ENCODE measurements at regions of chr10 and their contacts with region 1.

Region 1: GRCh38 chr10:96642973-96643372 is 56.2 kb upstream of the TM9SF3 start:
- DNase-seq: peak; percentile 28
- H3K4me3 Mint-ChIP-seq: no peak overlapping the region
- H3K27ac Mint-ChIP-seq: no peak overlapping the region
- H3K4me1 Mint-ChIP-seq: peaks cover 28% of the 10 kb centered on the region
- H3K27me3 Mint-ChIP-seq: no peaks in the 10 kb centered on the region

Region 2: GRCh38 chr10:96395931-96396877 is 246.8 kb before region 1 on chr10:
- intact Hi-C with region 1: loop called (anchors 5 kb)
- DNase-seq: peak; percentile 21
- H3K4me3 Mint-ChIP-seq: no peak overlapping the region
- H3K27ac Mint-ChIP-seq: no peak overlapping the region
- H3K4me1 Mint-ChIP-seq: no peaks in the 10 kb centered on the region
- H3K27me3 Mint-ChIP-seq: peaks cover 37% of the 10 kb centered on the region

Region 3: DNA sequence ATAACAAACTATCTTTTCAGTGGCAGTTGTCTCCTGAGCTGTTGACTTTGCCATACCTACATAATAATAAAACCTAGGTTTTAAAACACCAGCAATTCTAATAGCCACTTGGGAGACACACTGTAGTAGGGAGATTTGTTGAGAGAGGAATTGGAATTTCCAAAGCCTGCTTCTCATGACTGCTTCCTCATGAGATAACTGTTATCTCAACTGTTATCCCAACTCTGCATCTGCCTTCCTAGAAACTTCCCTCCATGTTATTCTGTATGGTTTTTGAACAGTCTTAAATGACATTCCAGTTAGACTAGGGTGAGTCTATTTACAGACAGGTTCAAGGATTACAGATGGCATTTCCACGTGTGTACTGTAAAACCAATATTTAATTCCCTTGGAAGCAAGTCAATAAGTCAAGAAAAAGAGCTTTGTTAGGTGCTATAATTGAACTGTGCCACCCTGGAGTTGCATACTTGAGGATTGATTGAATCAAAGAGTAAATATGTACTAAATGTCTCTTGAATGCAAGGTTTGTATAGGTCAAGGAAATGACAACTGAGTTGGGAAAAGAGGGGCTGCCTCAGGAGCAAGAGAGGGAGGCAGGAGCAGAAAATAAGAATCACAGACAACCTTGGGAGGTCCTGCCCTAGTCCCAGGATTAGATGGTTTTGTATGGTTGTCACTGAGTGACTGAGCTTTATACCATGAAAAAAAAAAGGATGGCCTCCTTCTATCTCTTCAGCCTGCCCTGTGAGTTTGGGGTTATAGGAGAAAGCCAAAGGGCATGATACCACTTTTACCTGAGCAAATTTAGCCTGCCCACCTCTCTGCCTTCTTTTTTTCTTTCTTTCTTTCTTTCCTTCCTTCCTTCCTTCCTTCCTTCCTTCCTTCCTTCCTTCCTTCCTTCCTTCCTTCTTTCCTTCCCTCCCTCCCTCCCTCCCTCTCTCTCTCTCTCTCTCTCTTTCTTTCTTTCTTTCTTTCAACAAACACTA is 46.3 kb before region 1 on chr10:
- intact Hi-C with region 1: no loop called
- DNase-seq: no peak
- H3K4me3 Mint-ChIP-seq: no peak overlapping the region
- H3K27ac Mint-ChIP-seq: no peak overlapping the region
- H3K4me1 Mint-ChIP-seq: peaks cover 5% of the 10 kb centered on the region
- H3K27me3 Mint-ChIP-seq: peaks cover 8% of the 10 kb centered on the region

Region 4: GRCh38 chr10:96719850-96720421 is 77.0 kb after region 1 on chr10:
- intact Hi-C with region 1: loop called (anchors 1 kb)
- DNase-seq: peak; percentile 14
- H3K4me3 Mint-ChIP-seq: peak overlapping the region; percentile 95
- H3K27ac Mint-ChIP-seq: peak overlapping the region; percentile 88
- H3K4me1 Mint-ChIP-seq: peaks cover 27% of the 10 kb centered on the region
- H3K27me3 Mint-ChIP-seq: peaks cover 9% of the 10 kb centered on the region

Region 5: GRCh38 chr10:96743988-96744585 is 101.1 kb after region 1 on chr10:
- intact Hi-C with region 1: loop called (anchors 5 kb)
- DNase-seq: no peak
- H3K4me3 Mint-ChIP-seq: no peak overlapping the region
- H3K27ac Mint-ChIP-seq: no peak overlapping the region
- H3K4me1 Mint-ChIP-seq: peaks cover 11% of the 10 kb centered on the region
- H3K27me3 Mint-ChIP-seq: peaks cover 8% of the 10 kb centered on the region

Region 6: DNA sequence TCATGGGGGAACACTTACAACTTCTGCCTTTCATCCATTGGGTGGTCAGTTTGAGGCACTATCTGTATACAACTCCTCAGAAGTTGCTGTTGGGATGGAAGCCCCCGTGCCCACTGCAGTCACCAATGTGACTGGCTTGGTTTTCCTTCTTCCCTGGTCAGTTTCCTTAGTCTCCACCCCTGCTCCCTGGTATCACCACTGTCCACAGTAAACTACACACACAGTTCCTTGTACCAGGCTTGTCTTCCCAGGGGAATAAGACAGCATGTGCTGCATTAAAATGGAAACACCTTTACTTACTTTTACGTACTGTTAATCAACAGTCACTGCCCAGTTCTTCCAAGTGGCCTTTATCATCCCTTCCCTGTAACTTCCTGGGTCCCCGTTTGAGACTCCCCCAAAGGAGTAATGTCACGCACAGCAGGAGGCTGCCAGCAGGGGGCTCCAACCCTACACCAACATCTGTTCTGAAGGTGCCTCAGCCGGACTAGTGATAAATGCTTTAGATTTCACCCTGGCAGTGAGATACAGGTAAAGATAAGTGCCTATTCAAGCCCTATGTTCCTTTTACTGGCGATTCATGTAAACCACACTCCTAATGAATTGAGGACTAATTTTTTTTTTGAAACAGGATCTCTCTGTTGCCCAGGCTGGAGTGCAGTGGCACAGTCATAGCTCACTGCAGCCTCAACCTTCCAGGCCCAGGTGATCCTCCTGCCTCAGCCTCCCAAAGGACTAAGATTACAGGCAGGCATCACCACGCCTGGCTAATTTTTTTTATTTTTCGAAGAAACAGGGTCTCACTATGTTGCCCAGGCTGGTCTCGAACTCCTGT is 122.7 kb after region 1 on chr10:
- intact Hi-C with region 1: loop called (anchors 1 kb)
- DNase-seq: peak; percentile 42
- H3K4me3 Mint-ChIP-seq: no peak overlapping the region
- H3K27ac Mint-ChIP-seq: no peak overlapping the region
- H3K4me1 Mint-ChIP-seq: peaks cover 6% of the 10 kb centered on the region
- H3K27me3 Mint-ChIP-seq: peaks cover 7% of the 10 kb centered on the region

Region 7: GRCh38 chr10:96910488-96911395 is 267.8 kb after region 1 on chr10:
- intact Hi-C with region 1: loop called (anchors 5 kb)
- DNase-seq: no peak
- H3K4me3 Mint-ChIP-seq: no peak overlapping the region
- H3K27ac Mint-ChIP-seq: no peak overlapping the region
- H3K4me1 Mint-ChIP-seq: peaks cover 21% of the 10 kb centered on the region
- H3K27me3 Mint-ChIP-seq: no peaks in the 10 kb centered on the region

Region 8: DNA sequence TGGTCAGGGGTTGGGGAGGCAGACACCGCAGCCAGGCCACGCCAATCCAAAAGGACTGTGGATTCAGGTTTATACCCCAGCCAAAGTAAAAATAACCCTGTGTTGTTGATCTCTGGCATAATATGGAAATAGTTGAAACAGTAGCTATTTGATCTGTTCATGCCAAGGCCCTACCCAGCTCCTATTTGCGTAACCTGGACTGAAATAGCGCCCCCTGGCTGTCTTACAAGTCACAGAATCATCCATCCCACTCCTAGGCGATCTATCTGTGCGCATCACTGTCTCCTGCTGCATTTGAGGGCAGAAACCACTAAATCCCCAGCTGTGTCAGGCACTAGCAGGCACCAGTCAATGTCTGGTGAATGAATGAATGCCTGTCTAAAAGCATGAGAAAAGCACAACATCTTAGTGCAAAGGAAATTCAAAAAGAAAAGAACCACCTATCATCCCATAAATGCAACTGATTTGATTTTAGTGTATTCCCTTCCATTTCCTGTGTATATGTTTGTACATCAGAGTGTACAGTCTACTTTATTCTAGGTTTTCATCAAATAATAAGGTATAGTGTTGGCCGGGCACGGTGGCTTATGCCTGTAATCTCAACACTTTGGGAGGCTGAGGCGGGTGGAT is 382.8 kb after region 1 on chr10:
- intact Hi-C with region 1: loop called (anchors 5 kb)
- DNase-seq: peak; percentile 41
- H3K4me3 Mint-ChIP-seq: no peak overlapping the region
- H3K27ac Mint-ChIP-seq: no peak overlapping the region
- H3K4me1 Mint-ChIP-seq: peaks cover 10% of the 10 kb centered on the region
- H3K27me3 Mint-ChIP-seq: peaks cover 17% of the 10 kb centered on the region